Naive thymus-derived CD4-positive, alpha-beta T cell (primary cell): ENCODE measurements at regions of chr12 and their contacts with region 1.

Region 1: GRCh38 chr12:53379389-53380103 is 430 bp upstream of the SP1 start:
- DNase-seq: peak in 8 of 9 donors; percentile 54 to 100 (median 99)
- ATAC-seq: peak; percentile 85
- H3K4me3 ChIP-seq: peak overlapping the region; percentile 61
- H3K4me3 Mint-ChIP-seq: no peak overlapping the region
- H3K27ac ChIP-seq: peak overlapping the region; percentile 91
- H3K27ac Mint-ChIP-seq: no peak overlapping the region
- H3K4me1 ChIP-seq: peaks cover 37 to 40% of the 10 kb centered on the region in 2 donors
- H3K4me1 Mint-ChIP-seq: peaks cover 31 to 44% (median 37%) of the 10 kb centered on the region in 7 donors
- H3K27me3 ChIP-seq: no peaks in the 10 kb centered on the region
- H3K27me3 Mint-ChIP-seq: no peaks in the 10 kb centered on the region

Region 2: GRCh38 chr12:53180220-53180930 is 199.2 kb before region 1 on chr12 and contains the starts of genes CSAD and ZNF740:
- CTCF ChIA-PET with region 1: no interaction called
- POLR2A ChIA-PET with region 1: interaction called, 8 read pairs
- intact Hi-C with region 1: loop called (anchors 1 to 2 kb)
- DNase-seq: peak; percentile 86 to 98 (median 97)
- ATAC-seq: peak; percentile 98
- H3K4me3 ChIP-seq: peak within 1 kb of the TSS; percentile 89
- H3K4me3 Mint-ChIP-seq: peak within 1 kb of the TSS; percentile 84 to 98 (median 92)
- H3K27ac ChIP-seq: peak within 1 kb of the TSS; percentile 92
- H3K27ac Mint-ChIP-seq: peak within 1 kb of the TSS; percentile 93 to 98 (median 97)
- H3K4me1 ChIP-seq: peaks cover 30 to 46% of the 10 kb centered on the region in 2 donors
- H3K4me1 Mint-ChIP-seq: peaks cover 44 to 57% (median 52%) of the 10 kb centered on the region in 7 donors
- H3K27me3 ChIP-seq: no peaks in the 10 kb centered on the region
- H3K27me3 Mint-ChIP-seq: no peaks in the 10 kb centered on the region
- total RNA-seq, gene CSAD: 34.1 to 76.3 (median 69.1) TPM
- total RNA-seq, gene ZNF740: 37.2 to 135 (median 49.5) TPM

Region 3: GRCh38 chr12:53321074-53321814 is 58.3 kb before region 1 on chr12 and contains the start of gene AAAS:
- CTCF ChIA-PET with region 1: interaction called, 6 read pairs
- POLR2A ChIA-PET with region 1: interaction called, 17 read pairs
- intact Hi-C with region 1: loop called (anchors 1 kb)
- DNase-seq: peak; percentile 89 to 95 (median 94)
- ATAC-seq: peak; percentile 89
- H3K4me3 ChIP-seq: peak within 1 kb of the TSS; percentile 98
- H3K4me3 Mint-ChIP-seq: peak within 1 kb of the TSS; percentile 94 to 99 (median 96)
- H3K27ac ChIP-seq: peak within 1 kb of the TSS; percentile 73
- H3K27ac Mint-ChIP-seq: peak within 1 kb of the TSS; percentile 94 to 98 (median 94)
- H3K4me1 ChIP-seq: peaks cover 25 to 37% of the 10 kb centered on the region in 2 donors
- H3K4me1 Mint-ChIP-seq: peaks cover 23 to 47% (median 43%) of the 10 kb centered on the region in 7 donors
- H3K27me3 ChIP-seq: no peaks in the 10 kb centered on the region
- H3K27me3 Mint-ChIP-seq: peaks cover 0 to 3% (median 0%) of the 10 kb centered on the region in 5 donors
- total RNA-seq, gene AAAS: 35.4 to 73.5 (median 69.0) TPM

Region 4: GRCh38 chr12:53418221-53418620 is 38.7 kb after region 1 on chr12:
- CTCF ChIA-PET with region 1: interaction called, 15 read pairs
- POLR2A ChIA-PET with region 1: interaction called, 6 read pairs
- intact Hi-C with region 1: loop called (anchors 1 kb)
- DNase-seq: no peak
- ATAC-seq: no peak
- H3K4me3 ChIP-seq: no peak overlapping the region
- H3K4me3 Mint-ChIP-seq: peak overlapping the region in 2 of 10 donors; percentile 14 to 55
- H3K27ac ChIP-seq: no peak overlapping the region
- H3K27ac Mint-ChIP-seq: peak overlapping the region in 6 of 9 donors; percentile 23 to 72 (median 30)
- H3K4me1 ChIP-seq: peaks cover 4 to 7% of the 10 kb centered on the region in 2 donors
- H3K4me1 Mint-ChIP-seq: peaks cover 16 to 64% (median 54%) of the 10 kb centered on the region in 7 donors
- H3K27me3 ChIP-seq: no peaks in the 10 kb centered on the region
- H3K27me3 Mint-ChIP-seq: no peaks in the 10 kb centered on the region

Region 5: DNA sequence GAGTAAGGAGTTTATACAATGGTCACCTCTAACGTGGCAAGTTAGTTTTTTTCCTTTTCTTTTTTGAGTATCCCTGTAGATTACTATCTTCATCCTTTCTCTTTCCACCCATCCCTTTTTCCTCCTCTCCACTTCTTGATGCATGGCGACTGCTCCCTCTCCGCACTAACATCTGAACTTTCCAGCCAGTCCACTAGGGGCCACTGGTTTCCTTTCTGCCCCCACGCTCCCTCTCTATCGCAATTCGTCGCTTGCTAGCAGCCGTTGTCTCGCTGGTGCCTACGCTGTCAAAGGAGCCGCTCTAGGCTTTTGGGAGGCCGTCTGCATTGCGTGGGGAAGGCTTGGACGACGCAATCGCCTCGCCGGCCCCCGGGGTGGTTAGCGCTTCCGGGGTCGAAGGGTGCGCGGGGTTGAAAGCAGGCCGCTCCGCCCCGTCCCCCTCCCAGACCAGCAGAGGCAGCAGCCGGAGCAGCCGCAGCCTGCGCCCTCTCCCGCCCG is 72.2 kb after region 1 on chr12 and contains the start of gene PCBP2:
- CTCF ChIA-PET with region 1: no interaction called
- POLR2A ChIA-PET with region 1: interaction called, 6 read pairs
- intact Hi-C with region 1: loop called (anchors 1 kb)
- DNase-seq: peak; percentile 88 to 98 (median 97)
- ATAC-seq: peak; percentile 94
- H3K4me3 ChIP-seq: peak within 1 kb of the TSS; percentile 69
- H3K4me3 Mint-ChIP-seq: peak within 1 kb of the TSS; percentile 51 to 99 (median 98)
- H3K27ac ChIP-seq: peak within 1 kb of the TSS; percentile 96
- H3K27ac Mint-ChIP-seq: peak within 1 kb of the TSS; percentile 85 to 100 (median 99)
- H3K4me1 ChIP-seq: peaks cover 20 to 26% of the 10 kb centered on the region in 2 donors
- H3K4me1 Mint-ChIP-seq: peaks cover 23 to 42% (median 37%) of the 10 kb centered on the region in 7 donors
- H3K27me3 ChIP-seq: no peaks in the 10 kb centered on the region
- H3K27me3 Mint-ChIP-seq: no peaks in the 10 kb centered on the region
- total RNA-seq, gene PCBP2: 737 to 1,110 (median 928) TPM

Region 6: GRCh38 chr12:53508534-53509199 is 129.1 kb after region 1 on chr12:
- CTCF ChIA-PET with region 1: interaction called, 5 read pairs
- POLR2A ChIA-PET with region 1: interaction called, 9 read pairs
- intact Hi-C with region 1: loop called in 1 of 2 experiments (anchors 1 kb)
- DNase-seq: peak; percentile 63 to 82 (median 73)
- ATAC-seq: peak; percentile 98
- H3K4me3 ChIP-seq: no peak overlapping the region
- H3K4me3 Mint-ChIP-seq: peak overlapping the region in 1 of 10 donors; percentile 39
- H3K27ac ChIP-seq: peak overlapping the region; percentile 39
- H3K27ac Mint-ChIP-seq: peak overlapping the region in 8 of 9 donors; percentile 13 to 80 (median 66)
- H3K4me1 ChIP-seq: peaks cover 6 to 7% of the 10 kb centered on the region in 2 donors
- H3K4me1 Mint-ChIP-seq: peaks cover 5 to 17% (median 9%) of the 10 kb centered on the region in 7 donors
- H3K27me3 ChIP-seq: no peaks in the 10 kb centered on the region
- H3K27me3 Mint-ChIP-seq: no peaks in the 10 kb centered on the region